Activated T-helper 2 cell treated with anti-CD3 and anti-CD28 coated beads, Interferon-gamma antibody, Interleukin-2, Interleukin-4, amounts not matched to agents 10 μg/mL and 5 μg/mL and 100 μg/mL, durations not matched to agents 14 hours and 24 hours and 36 hours (primary cell): ENCODE measurements at regions of chr15 and their contacts with region 1.

Region 1: GRCh38 chr15:39495871-39496840 is 84.7 kb upstream of the THBS1 start:
- DNase-seq: no peak
- H3K4me3 Mint-ChIP-seq: no peak overlapping the region
- H3K27ac Mint-ChIP-seq: no peak overlapping the region
- H3K4me1 Mint-ChIP-seq: peaks cover 17% of the 10 kb centered on the region
- H3K27me3 Mint-ChIP-seq: peaks cover 20% of the 10 kb centered on the region

Region 2: DNA sequence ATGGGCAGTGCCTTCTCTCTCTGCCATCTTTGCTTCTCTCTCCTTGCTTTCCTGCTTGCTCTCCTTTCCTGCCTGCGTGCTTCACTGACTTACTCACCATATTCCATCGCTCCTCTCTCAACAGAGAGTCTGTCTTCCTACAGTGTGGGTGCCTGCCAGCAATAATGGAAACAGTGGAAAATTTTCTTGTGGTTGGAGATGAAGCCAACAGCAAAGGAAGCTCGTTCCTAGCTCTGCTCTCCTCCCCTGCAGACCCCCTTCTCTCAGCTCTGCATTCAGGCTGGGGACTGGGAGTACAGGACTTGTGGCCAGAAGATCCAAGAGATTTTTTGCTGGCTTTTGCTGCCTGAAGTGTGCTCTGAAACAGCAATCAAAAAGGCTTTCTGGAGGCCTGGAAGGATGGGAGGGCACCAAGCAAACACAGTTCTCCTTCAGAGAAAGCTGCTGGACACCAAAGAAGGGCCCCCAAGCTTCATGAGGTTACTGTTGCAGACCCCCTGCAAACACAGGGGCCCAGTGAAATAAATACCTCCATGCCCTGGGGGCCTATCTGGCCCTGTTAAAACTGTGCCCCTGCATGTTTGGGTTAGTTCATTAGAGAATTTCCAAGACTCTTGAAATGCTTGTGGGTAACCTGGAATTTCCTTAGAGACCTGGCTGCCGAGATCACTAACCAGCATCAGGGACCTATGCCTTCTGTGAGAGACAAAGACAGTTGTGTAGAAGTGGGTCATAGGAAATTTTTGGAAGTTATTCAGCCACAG is 781.7 kb before region 1 on chr15:
- intact Hi-C with region 1: loop called (anchors 10 kb)
- DNase-seq: no peak
- H3K4me3 Mint-ChIP-seq: no peak overlapping the region
- H3K27ac Mint-ChIP-seq: no peak overlapping the region
- H3K4me1 Mint-ChIP-seq: no peaks in the 10 kb centered on the region
- H3K27me3 Mint-ChIP-seq: peaks cover 8% of the 10 kb centered on the region

Region 3: DNA sequence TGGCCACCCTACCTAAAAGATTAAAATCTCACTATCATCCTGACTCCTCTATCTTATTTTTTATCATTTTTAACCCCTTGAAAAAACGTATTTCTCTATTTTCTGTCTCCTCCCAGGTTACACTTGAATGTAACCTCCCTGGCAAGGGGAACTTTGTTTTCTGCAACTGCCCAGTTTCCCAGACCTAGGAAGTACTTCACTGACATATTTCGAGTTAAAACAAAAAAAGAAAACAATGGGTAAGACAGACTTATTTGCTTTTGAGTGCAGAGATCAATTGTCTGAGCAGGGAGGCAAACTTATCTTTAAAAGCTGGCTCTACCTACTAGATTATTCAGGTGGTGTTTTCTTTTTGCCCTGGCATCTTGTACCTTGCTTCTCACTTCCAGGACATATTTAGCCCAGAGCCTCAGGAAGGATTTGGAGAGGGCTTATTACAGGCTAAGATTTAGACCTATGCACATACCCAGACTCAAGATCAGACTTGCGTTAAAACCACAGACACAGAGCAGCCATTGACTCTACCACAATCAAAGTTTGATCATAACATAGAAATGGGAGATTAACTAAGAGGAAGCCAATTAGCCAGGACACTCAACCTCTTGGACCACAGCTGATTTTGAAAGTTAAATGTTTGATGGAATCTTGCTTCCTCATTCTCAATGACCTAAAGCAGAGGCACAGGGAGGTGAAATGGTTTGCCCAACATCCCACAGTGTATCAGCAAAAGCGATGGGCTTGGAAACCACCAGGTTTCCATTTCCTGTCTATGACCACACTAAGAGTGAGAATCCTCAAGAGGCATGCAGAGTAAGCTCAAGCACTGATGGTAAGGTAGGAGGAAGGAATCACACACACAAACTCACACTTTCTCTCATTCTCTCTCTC is 84.8 kb before region 1 on chr15:
- intact Hi-C with region 1: loop called (anchors 10 kb)
- DNase-seq: no peak
- H3K4me3 Mint-ChIP-seq: no peak overlapping the region
- H3K27ac Mint-ChIP-seq: no peak overlapping the region
- H3K4me1 Mint-ChIP-seq: peaks cover 13% of the 10 kb centered on the region
- H3K27me3 Mint-ChIP-seq: peaks cover 53% of the 10 kb centered on the region

Region 4: GRCh38 chr15:39455471-39455991 is 40.6 kb before region 1 on chr15:
- intact Hi-C with region 1: no loop called
- DNase-seq: no peak
- H3K4me3 Mint-ChIP-seq: no peak overlapping the region
- H3K27ac Mint-ChIP-seq: no peak overlapping the region
- H3K4me1 Mint-ChIP-seq: peaks cover 4% of the 10 kb centered on the region
- H3K27me3 Mint-ChIP-seq: peaks cover 16% of the 10 kb centered on the region